ENCODE measurements at regions of chr12 and their contacts with region 1.

Region 1: GRCh38 chr12:71685914-71686665 is at the start of gene TMEM19:
- DNase-seq: peak; percentile 78 to 89
- H3K4me3 ChIP-seq: peak within 1 kb of the TSS; percentile 96
- H3K27ac ChIP-seq: peak within 1 kb of the TSS; percentile 72
- H3K4me1 ChIP-seq: peaks cover 13% of the 10 kb centered on the region
- H3K27me3 ChIP-seq: no peaks in the 10 kb centered on the region
- CTCF ChIP-seq: peak; percentile 20; the same call in 1 of the 2 replicates
- total RNA-seq, gene TMEM19: 17.3 and 39.5 TPM in 2 replicates

Region 2: GRCh38 chr12:71663561-71664294 is 22.4 kb before region 1 on chr12 and contains the start of gene ZFC3H1:
- CTCF ChIA-PET with region 1: no interaction called
- POLR2A ChIA-PET with region 1: interaction called, 11 read pairs
- intact Hi-C with region 1: loop called (anchors 1 kb)
- DNase-seq: peak; percentile 87 to 98
- H3K4me3 ChIP-seq: peak within 1 kb of the TSS; percentile 70
- H3K27ac ChIP-seq: peak within 1 kb of the TSS; percentile 94
- H3K4me1 ChIP-seq: peaks cover 16% of the 10 kb centered on the region
- H3K27me3 ChIP-seq: no peaks in the 10 kb centered on the region
- CTCF ChIP-seq: no peak; the same call in 1 of the 2 replicates
- total RNA-seq, gene ZFC3H1: 47.4 and 53.4 TPM in 2 replicates

Region 3: GRCh38 chr12:71671311-71671710 is 14.8 kb before region 1 on chr12:
- CTCF ChIA-PET with region 1: no interaction called
- POLR2A ChIA-PET with region 1: interaction called, 14 read pairs
- intact Hi-C with region 1: no loop called
- DNase-seq: no peak
- H3K4me3 ChIP-seq: no peak overlapping the region
- H3K27ac ChIP-seq: no peak overlapping the region
- H3K4me1 ChIP-seq: no peaks in the 10 kb centered on the region
- H3K27me3 ChIP-seq: no peaks in the 10 kb centered on the region
- CTCF ChIP-seq: no peak

Region 4: DNA sequence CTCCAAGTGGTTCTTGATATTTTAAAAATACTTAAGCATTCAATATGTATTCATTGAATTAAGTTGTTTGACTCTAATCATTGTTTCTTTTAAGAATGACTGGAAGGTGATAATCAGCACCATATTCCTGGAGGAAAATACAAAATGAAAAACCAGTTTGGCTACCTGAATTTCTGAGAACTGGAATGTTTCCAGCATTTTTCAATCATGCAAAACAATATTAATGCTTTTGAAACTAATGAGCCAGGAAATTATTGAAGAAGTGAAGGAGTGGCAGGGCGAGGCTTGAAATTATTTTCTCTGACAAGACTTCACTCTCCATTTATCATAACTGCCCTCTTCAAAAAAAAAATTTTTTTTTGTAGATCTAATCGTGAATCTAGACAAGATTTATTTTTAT is 18.8 kb after region 1 on chr12:
- CTCF ChIA-PET with region 1: no interaction called
- POLR2A ChIA-PET with region 1: no interaction called
- intact Hi-C with region 1: loop called (anchors 2 kb)
- DNase-seq: peak in 1 of 2 experiments; percentile 40
- H3K4me3 ChIP-seq: no peak overlapping the region
- H3K27ac ChIP-seq: no peak overlapping the region
- H3K4me1 ChIP-seq: peaks cover 17% of the 10 kb centered on the region
- H3K27me3 ChIP-seq: no peaks in the 10 kb centered on the region
- CTCF ChIP-seq: no peak

Region 5: DNA sequence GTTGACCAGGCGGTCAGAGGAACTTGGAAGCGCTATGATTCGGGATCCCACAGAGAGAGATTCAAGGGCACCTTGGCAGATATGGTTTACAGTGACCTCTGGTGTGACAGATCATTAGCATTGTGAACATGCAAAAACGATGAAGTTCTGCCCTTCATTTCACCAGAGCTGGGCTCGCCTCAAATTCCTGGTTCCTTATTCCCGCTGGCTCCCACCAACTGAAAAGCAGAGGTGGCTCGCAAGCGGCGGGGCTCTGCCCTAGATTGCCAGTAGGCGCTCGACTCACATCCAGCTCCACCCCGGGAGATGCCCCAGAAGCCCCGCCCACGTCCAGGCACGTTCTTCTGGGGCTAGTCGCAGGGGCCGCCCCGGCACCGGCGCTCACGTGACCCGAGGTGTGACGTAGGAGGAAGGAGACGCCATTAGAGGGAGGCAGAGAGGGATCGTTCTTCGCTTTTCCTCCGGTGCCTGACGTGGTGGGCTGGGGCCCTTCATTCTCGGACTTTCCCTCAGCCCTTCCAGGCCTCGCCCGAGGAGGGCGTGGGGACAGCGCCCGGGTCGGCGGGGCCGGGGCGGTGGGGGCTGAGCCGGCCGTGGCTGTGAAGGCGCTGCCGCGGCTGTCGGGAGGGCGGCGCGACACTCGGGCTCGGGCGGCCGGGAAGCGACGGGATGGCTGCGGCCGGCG is 68.5 kb after region 1 on chr12 and contains the start of gene RAB21:
- CTCF ChIA-PET with region 1: no interaction called
- POLR2A ChIA-PET with region 1: interaction called, 4 read pairs
- intact Hi-C with region 1: loop called (anchors 2 kb)
- DNase-seq: peak; percentile 93 to 96
- H3K4me3 ChIP-seq: peak within 1 kb of the TSS; percentile 69
- H3K27ac ChIP-seq: peak within 1 kb of the TSS; percentile 62
- H3K4me1 ChIP-seq: peaks cover 16% of the 10 kb centered on the region
- H3K27me3 ChIP-seq: peaks cover 7% of the 10 kb centered on the region; the same call in 1 of the 2 replicates
- CTCF ChIP-seq: peak; percentile 35; the same call in 1 of the 2 replicates
- total RNA-seq, gene RAB21: 37.6 and 47.2 TPM in 2 replicates

Region 6: DNA sequence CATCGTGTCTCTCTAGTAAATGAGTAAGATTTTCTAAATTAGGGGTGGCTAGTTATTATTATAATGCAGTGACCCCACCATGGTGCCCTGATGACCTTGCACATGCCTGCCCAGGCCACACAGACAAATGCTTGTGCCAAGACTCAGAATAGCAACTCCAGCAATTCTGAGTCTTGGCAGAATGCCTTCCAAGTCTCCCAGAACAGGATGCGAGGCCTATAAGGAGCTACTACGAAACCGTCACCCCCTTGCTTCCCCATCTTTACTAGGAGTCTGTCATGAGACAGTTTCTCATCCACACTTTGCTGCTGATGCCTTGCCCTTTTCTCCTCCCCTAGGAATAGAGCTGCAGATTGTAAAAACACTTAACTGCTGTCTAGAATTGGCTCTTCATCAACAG is 1145.9 kb after region 1 on chr12:
- CTCF ChIA-PET with region 1: no interaction called
- POLR2A ChIA-PET with region 1: no interaction called
- intact Hi-C with region 1: no loop called
- DNase-seq: no peak
- H3K4me3 ChIP-seq: no peak overlapping the region
- H3K27ac ChIP-seq: no peak overlapping the region
- H3K4me1 ChIP-seq: no peaks in the 10 kb centered on the region
- H3K27me3 ChIP-seq: no peaks in the 10 kb centered on the region
- CTCF ChIP-seq: no peak